ENCODE measurements at regions of chr18 and their contacts with region 1.

Region 1: GRCh38 chr18:63974991-63975390 is 5.1 kb downstream of the SERPINB8 start:
- DNase-seq: no peak
- H3K4me3 Mint-ChIP-seq: no peak overlapping the region
- H3K27ac Mint-ChIP-seq: no peak overlapping the region
- H3K4me1 Mint-ChIP-seq: peaks cover 26% of the 10 kb centered on the region
- H3K27me3 Mint-ChIP-seq: no peaks in the 10 kb centered on the region

Region 2: GRCh38 chr18:63963615-63964256 is 11.3 kb before region 1 on chr18:
- CTCF ChIA-PET with region 1: interaction called, 15 read pairs
- POLR2A ChIA-PET with region 1: no interaction called
- DNase-seq: peak; percentile 66
- H3K4me3 Mint-ChIP-seq: no peak overlapping the region
- H3K27ac Mint-ChIP-seq: no peak overlapping the region
- H3K4me1 Mint-ChIP-seq: no peaks in the 10 kb centered on the region
- H3K27me3 Mint-ChIP-seq: peaks cover 4% of the 10 kb centered on the region

Region 3: DNA sequence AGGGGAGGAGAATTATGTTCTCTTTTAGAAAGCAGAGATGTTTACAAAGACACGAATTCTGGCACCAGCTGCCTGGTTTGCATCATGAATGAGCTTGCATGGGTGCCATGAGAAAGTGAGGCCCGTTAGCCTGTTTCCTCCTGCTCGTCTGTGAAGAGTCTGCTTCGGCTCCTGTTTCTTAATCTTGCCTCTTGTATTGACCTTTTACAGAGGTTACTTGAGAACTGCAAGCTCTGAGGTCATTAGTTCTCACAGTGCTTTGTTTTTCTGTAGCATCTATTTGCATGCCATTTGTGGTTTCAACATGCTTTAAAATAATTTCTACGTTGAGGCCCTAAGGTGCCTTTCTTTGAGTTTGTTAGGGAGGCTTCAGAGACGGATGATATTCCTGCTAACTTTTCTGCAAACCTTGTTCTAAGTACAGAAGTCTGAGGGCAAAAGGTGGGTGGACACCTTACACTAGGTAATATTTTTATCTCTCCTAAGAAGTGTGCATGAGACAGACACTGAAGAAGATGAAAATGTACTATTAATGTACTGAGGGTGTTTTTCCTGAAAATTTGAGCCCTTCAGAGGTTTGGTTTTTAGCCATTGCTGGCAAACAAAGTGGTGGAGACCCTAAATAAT is 227.3 kb after region 1 on chr18:
- CTCF ChIA-PET with region 1: no interaction called
- POLR2A ChIA-PET with region 1: no interaction called
- DNase-seq: no peak
- H3K4me3 Mint-ChIP-seq: no peak overlapping the region
- H3K27ac Mint-ChIP-seq: no peak overlapping the region
- H3K4me1 Mint-ChIP-seq: peaks cover 1% of the 10 kb centered on the region
- H3K27me3 Mint-ChIP-seq: no peaks in the 10 kb centered on the region

Measured in activated CD4-positive, alpha-beta T cell treated with anti-CD3 and anti-CD28 coated beads, Interleukin-2, amount 10 ng/mL, durations not matched to agents 7 days and 5 days (primary cell).